Caco-2 (cell line): ENCODE measurements at regions of chr2 and their contacts with region 1.

Region 1: GRCh38 chr2:74919827-74920226 is 38.6 kb upstream of the POLE4 start:
- DNase-seq: peak; percentile 75 to 84
- H3K4me3 ChIP-seq: peak overlapping the region; percentile 30
- H3K4me3 Mint-ChIP-seq: peak overlapping the region; percentile 45
- H3K27ac Mint-ChIP-seq: no peak overlapping the region
- H3K4me1 ChIP-seq: peaks cover 18% of the 10 kb centered on the region
- H3K4me1 Mint-ChIP-seq: peaks cover 30% of the 10 kb centered on the region
- H3K27me3 ChIP-seq: no peaks in the 10 kb centered on the region
- H3K27me3 Mint-ChIP-seq: no peaks in the 10 kb centered on the region
- CTCF ChIP-seq: peak; percentile 72 to 89

Region 2: GRCh38 chr2:74632209-74632938 is 287.5 kb before region 1 on chr2:
- CTCF ChIA-PET with region 1: no interaction called
- POLR2A ChIA-PET with region 1: no interaction called
- intact Hi-C with region 1: no loop called
- DNase-seq: no peak
- H3K4me3 ChIP-seq: no peak overlapping the region
- H3K4me3 Mint-ChIP-seq: no peak overlapping the region
- H3K27ac Mint-ChIP-seq: no peak overlapping the region
- H3K4me1 ChIP-seq: no peaks in the 10 kb centered on the region
- H3K4me1 Mint-ChIP-seq: no peaks in the 10 kb centered on the region
- H3K27me3 ChIP-seq: no peaks in the 10 kb centered on the region
- H3K27me3 Mint-ChIP-seq: peaks cover 17% of the 10 kb centered on the region
- CTCF ChIP-seq: no peak

Region 3: DNA sequence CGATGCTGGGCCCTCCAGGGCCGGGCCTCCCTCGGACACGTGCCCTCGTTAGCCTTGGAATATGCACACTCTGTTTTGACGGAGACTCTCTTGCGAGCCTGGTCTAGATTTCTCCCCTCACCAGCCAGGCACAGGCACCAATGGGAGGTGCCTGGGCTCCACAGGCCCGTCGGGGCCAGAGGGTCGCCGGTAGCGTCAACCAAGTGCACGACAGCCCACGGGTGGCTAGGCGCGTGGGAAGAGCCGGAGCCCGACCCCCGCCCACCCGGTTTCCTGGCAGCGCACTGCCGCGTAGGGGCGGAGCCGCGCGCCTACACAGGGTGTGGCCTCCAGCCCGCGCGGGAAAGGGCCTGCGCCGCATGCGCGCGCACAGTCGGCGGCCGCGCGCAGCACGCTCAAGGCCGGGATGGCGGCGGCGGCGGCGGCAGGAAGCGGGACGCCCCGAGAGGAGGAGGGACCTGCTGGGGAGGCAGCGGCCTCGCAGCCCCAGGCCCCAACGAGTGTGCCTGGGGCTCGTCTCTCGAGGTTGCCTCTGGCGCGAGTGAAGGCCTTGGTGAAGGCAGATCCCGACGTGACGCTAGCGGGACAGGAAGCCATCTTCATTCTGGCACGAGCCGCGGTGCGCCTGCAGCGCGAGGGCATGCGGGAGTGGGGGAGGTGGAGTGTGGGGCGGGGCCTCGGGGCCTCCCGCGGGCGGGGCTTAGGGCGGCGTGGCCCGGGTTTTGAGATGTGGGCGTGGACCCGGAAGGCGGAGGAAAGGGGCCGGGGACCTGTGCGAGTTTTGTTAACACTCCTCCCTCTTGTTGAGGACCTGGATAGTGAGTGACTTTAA is 38.7 kb after region 1 on chr2 and contains the start of gene POLE4:
- CTCF ChIA-PET with region 1: no interaction called
- POLR2A ChIA-PET with region 1: no interaction called
- intact Hi-C with region 1: loop called (anchors 2 kb)
- DNase-seq: peak; percentile 95 to 96
- H3K4me3 ChIP-seq: peak within 1 kb of the TSS; percentile 90
- H3K4me3 Mint-ChIP-seq: peak within 1 kb of the TSS; percentile 92
- H3K27ac Mint-ChIP-seq: peak within 1 kb of the TSS; percentile 98
- H3K4me1 ChIP-seq: peaks cover 14% of the 10 kb centered on the region
- H3K4me1 Mint-ChIP-seq: peaks cover 22% of the 10 kb centered on the region
- H3K27me3 ChIP-seq: no peaks in the 10 kb centered on the region
- H3K27me3 Mint-ChIP-seq: no peaks in the 10 kb centered on the region
- CTCF ChIP-seq: peak in 1 of 2 experiments; percentile 2
- total RNA-seq, gene POLE4: 101 and 117 TPM in 2 replicates

Region 4: DNA sequence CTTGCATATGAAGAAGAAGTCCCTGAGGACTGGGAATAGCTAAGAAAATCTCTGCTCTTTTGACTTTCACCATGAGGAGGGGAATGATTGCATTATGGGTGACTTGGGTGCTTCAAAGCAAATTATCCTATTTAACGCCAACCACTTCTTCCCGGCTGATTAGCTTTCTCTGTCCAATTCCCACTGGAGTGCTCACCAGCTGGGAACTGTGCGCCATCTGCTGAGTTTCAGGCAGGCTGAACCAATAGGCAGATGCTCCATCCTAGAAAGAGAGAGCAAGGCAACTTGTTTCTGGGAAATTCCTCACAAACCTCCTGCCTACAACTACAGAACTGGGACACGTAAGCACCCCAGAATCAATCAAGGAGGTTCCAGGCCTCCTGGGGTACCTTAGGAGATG is 88.0 kb after region 1 on chr2:
- CTCF ChIA-PET with region 1: no interaction called
- POLR2A ChIA-PET with region 1: no interaction called
- intact Hi-C with region 1: loop called (anchors 5 kb)
- DNase-seq: peak in 1 of 2 experiments; percentile 16
- H3K4me3 ChIP-seq: no peak overlapping the region
- H3K4me3 Mint-ChIP-seq: no peak overlapping the region
- H3K27ac Mint-ChIP-seq: no peak overlapping the region
- H3K4me1 ChIP-seq: peaks cover 16% of the 10 kb centered on the region
- H3K4me1 Mint-ChIP-seq: peaks cover 8% of the 10 kb centered on the region
- H3K27me3 ChIP-seq: no peaks in the 10 kb centered on the region
- H3K27me3 Mint-ChIP-seq: no peaks in the 10 kb centered on the region
- CTCF ChIP-seq: no peak

Region 5: GRCh38 chr2:75199428-75200011 is 279.7 kb after region 1 on chr2 and contains the start of gene TACR1:
- CTCF ChIA-PET with region 1: no interaction called
- POLR2A ChIA-PET with region 1: no interaction called
- intact Hi-C with region 1: loop called (anchors 5 kb)
- DNase-seq: peak; percentile 76 to 78
- H3K4me3 ChIP-seq: peak within 1 kb of the TSS; percentile 21
- H3K4me3 Mint-ChIP-seq: peak within 1 kb of the TSS; percentile 75
- H3K27ac Mint-ChIP-seq: no peak within 1 kb of the TSS
- H3K4me1 ChIP-seq: peaks cover 15% of the 10 kb centered on the region; the same call in 1 of the 2 replicates
- H3K4me1 Mint-ChIP-seq: peaks cover 6% of the 10 kb centered on the region
- H3K27me3 ChIP-seq: peaks cover 9% of the 10 kb centered on the region
- H3K27me3 Mint-ChIP-seq: peaks cover 18% of the 10 kb centered on the region
- CTCF ChIP-seq: peak; percentile 49 to 69
- total RNA-seq, gene TACR1: 0.07 TPM in 2 replicates